Activated T-helper 2 cell treated with anti-CD3 and anti-CD28 coated beads, Interferon-gamma antibody, Interleukin-2, Interleukin-4, amounts not matched to agents 10 μg/mL and 5 μg/mL and 100 μg/mL, durations not matched to agents 14 hours and 24 hours and 36 hours (primary cell): ENCODE measurements at regions of chr16 and their contacts with region 1.

Region 1: DNA sequence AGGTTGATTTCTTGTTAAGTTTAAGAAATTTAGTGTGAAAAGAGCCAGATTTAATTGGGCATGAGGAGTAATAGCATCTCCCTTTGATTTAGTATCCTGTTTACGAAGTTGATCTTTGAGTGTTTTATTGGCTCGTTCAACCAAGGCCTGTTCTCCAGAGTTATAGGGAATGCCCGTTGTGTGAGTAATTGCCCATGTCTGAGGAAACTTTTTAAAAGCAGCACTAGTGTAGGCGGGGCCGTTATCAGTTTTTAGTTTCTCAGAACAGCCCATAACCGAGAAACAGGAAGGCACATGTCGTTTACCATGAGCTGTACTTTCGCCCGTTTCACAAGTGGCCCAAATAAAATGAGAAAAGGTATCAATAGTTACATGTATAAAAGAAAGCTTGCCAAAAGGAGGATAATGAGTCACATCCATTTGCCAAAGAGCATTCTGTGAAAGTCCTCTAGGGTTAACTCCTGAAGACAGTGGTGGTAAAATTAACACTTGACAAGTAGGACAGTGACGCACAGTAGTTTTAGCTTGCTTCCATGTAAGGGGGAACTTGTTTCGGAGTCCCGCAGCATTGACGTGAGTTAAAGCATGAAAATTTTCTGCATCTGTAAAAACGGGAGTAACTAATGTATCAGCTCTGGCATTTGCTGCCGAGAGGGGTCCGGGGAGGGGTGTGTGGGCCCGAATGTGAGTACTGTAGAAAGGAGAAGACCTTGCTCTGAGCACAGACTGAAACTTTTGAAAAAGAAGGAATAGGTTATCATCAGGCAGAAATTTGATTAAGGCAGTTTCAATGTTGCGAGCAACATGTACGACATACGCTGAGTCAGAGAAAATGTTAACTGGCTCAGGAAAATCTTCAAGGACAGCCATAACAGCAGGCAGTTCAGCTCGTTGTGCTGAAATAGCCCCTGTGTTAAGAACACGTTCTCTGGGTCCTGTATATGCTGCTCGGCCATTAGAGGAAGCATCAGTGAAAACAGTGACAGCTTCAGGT is 18.5 kb upstream of the KCTD5 start:
- DNase-seq: peak; percentile 31
- H3K4me3 Mint-ChIP-seq: peak overlapping the region; percentile 78
- H3K27ac Mint-ChIP-seq: peak overlapping the region; percentile 95
- H3K4me1 Mint-ChIP-seq: peaks cover 54% of the 10 kb centered on the region
- H3K27me3 Mint-ChIP-seq: no peaks in the 10 kb centered on the region

Region 2: DNA sequence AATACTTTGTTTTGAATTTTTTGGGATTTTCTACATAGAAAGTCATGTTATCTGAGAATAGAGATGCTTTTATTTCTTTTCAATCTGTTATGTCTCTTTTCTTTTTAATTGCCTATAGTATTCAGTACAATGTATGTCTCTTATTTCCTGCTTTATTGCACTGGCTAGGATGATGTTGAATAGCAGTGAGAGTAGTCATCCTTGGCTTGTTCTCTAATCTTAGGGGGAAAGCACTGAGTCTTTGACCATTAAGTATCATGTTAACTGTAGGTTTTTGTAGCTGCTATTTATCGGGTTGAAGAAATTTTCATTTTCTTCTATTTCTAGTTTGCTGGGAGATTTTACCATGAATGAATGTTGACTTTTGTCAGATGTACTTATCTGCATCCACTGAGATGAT is 313.4 kb before region 1 on chr16:
- intact Hi-C with region 1: no loop called
- DNase-seq: no peak
- H3K4me3 Mint-ChIP-seq: no peak overlapping the region
- H3K27ac Mint-ChIP-seq: no peak overlapping the region
- H3K4me1 Mint-ChIP-seq: no peaks in the 10 kb centered on the region
- H3K27me3 Mint-ChIP-seq: peaks cover 33% of the 10 kb centered on the region

Region 3: GRCh38 chr16:2682209-2683021 is 18.6 kb after region 1 on chr16 and contains the start of gene KCTD5:
- intact Hi-C with region 1: loop called (anchors 1 kb)
- DNase-seq: peak; percentile 96
- H3K4me3 Mint-ChIP-seq: peak within 1 kb of the TSS; percentile 98
- H3K27ac Mint-ChIP-seq: peak within 1 kb of the TSS; percentile 91
- H3K4me1 Mint-ChIP-seq: peaks cover 18% of the 10 kb centered on the region
- H3K27me3 Mint-ChIP-seq: no peaks in the 10 kb centered on the region
- total RNA-seq, gene KCTD5: 65.5 and 68.5 TPM in 2 replicates